ENCODE measurements at regions of chr22 and their contacts with region 1.

Region 1: GRCh38 chr22:32764330-32765131 is 37.0 kb upstream of the TIMP3 start:
- DNase-seq: no peak
- ATAC-seq: no peak
- H3K4me3 ChIP-seq: no peak overlapping the region
- H3K27ac ChIP-seq: no peak overlapping the region
- H3K4me1 ChIP-seq: no peaks in the 10 kb centered on the region
- H3K27me3 ChIP-seq: no peaks in the 10 kb centered on the region
- CTCF ChIP-seq: no peak
- EP300 ChIP-seq: no peak
- POLR2A ChIP-seq: no peak
- RAD21 ChIP-seq: no peak

Region 2: DNA sequence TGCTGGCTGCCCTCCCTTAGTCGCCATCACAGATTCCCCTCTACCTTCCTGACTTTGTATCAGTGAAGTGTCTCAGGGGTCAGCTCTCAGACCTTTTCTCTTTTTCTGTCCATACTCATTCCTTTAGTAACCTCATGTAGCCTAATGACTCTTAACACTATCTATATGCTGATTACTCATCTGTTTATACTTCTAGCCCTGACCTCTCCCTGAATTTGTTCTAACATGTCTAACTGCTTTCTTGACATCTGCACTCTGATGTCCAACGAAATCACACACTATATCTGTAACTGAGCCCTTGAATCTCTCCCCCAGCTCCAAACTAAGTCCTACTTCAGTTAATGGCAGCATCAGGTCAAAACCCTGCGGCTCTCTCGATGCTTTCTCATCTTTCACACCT is 98.9 kb before region 1 on chr22:
- CTCF ChIA-PET with region 1: no interaction called
- POLR2A ChIA-PET with region 1: no interaction called
- RAD21 ChIA-PET with region 1: no interaction called
- SMC1A ChIA-PET with region 1: no interaction called
- in situ Hi-C with region 1: no loop called
- intact Hi-C with region 1: no loop called
- DNase-seq: no peak
- ATAC-seq: no peak
- H3K4me3 ChIP-seq: no peak overlapping the region
- H3K27ac ChIP-seq: no peak overlapping the region
- H3K4me1 ChIP-seq: no peaks in the 10 kb centered on the region
- H3K27me3 ChIP-seq: 0 out of 4 replicates have a peak, but pooled peaks cover 0 to 6% of the 10 kb centered on the region in 2 experiments
- CTCF ChIP-seq: no peak
- EP300 ChIP-seq: no peak
- POLR2A ChIP-seq: no peak
- RAD21 ChIP-seq: no peak

Region 3: GRCh38 chr22:32754413-32755041 is 10.0 kb before region 1 on chr22:
- CTCF ChIA-PET with region 1: no interaction called
- POLR2A ChIA-PET with region 1: no interaction called
- RAD21 ChIA-PET with region 1: no interaction called
- SMC1A ChIA-PET with region 1: no interaction called
- in situ Hi-C with region 1: no loop called
- intact Hi-C with region 1: no loop called
- DNase-seq: no peak
- ATAC-seq: no peak
- H3K4me3 ChIP-seq: no peak overlapping the region
- H3K27ac ChIP-seq: no peak overlapping the region
- H3K4me1 ChIP-seq: no peaks in the 10 kb centered on the region
- H3K27me3 ChIP-seq: no peaks in the 10 kb centered on the region; a peak in 1 of 4 replicates
- CTCF ChIP-seq: no peak
- EP300 ChIP-seq: no peak
- POLR2A ChIP-seq: no peak
- RAD21 ChIP-seq: no peak

Region 4: DNA sequence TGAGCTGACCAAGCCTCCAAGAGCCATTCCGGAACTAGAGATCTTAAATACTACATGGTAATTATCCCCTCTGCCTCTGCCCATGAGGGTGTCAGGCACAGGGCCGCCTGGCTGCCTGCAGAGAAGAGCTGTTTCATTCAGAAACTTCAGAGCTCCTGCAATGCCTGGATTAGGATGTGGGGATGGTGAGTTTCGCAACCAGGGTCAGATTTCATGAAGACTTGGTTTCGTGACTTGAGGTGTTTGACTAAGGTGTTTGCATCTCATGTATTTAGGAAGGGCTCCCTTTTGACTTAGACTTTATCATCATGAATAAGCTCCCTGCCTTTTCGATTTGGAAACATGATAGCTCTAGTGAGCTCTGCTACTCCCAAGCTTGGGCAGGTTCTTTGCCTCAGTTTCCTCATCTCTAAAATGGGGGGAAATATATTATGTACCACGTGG is 46.1 kb after region 1 on chr22:
- CTCF ChIA-PET with region 1: no interaction called
- POLR2A ChIA-PET with region 1: no interaction called
- RAD21 ChIA-PET with region 1: no interaction called
- SMC1A ChIA-PET with region 1: no interaction called
- in situ Hi-C with region 1: loop called (anchors 5 kb)
- intact Hi-C with region 1: no loop called
- DNase-seq: no peak
- ATAC-seq: no peak
- H3K4me3 ChIP-seq: no peak overlapping the region
- H3K27ac ChIP-seq: no peak overlapping the region
- H3K4me1 ChIP-seq: no peaks in the 10 kb centered on the region
- H3K27me3 ChIP-seq: peaks cover 0 to 2% of the 10 kb centered on the region in 2 experiments; a peak in 1 of 4 replicates
- CTCF ChIP-seq: no peak
- EP300 ChIP-seq: no peak
- POLR2A ChIP-seq: no peak
- RAD21 ChIP-seq: no peak